CD8-positive, alpha-beta T cell (primary cell): ENCODE measurements at regions of chr16 and their contacts with region 1.

Region 1: GRCh38 chr16:30065143-30065850 is at the start of gene ALDOA:
- DNase-seq: peak; percentile 82 to 97 (median 94)
- ATAC-seq: peak; percentile 82
- H3K4me3 ChIP-seq: peak within 1 kb of the TSS; percentile 94 to 99
- H3K4me3 Mint-ChIP-seq: peak within 1 kb of the TSS; percentile 98
- H3K27ac ChIP-seq: peak within 1 kb of the TSS; percentile 87 to 94
- H3K27ac Mint-ChIP-seq: peak within 1 kb of the TSS; percentile 98
- H3K4me1 ChIP-seq: peaks cover 48% of the 10 kb centered on the region
- H3K4me1 Mint-ChIP-seq: peaks cover 43% of the 10 kb centered on the region
- H3K27me3 ChIP-seq: no peaks in the 10 kb centered on the region
- H3K27me3 Mint-ChIP-seq: no peaks in the 10 kb centered on the region
- CTCF ChIP-seq: no peak
- total RNA-seq, gene ALDOA: 339 to 359 TPM

Region 2: GRCh38 chr16:29951625-29952365 is 113.5 kb before region 1 on chr16:
- CTCF ChIA-PET with region 1: no interaction called
- POLR2A ChIA-PET with region 1: no interaction called
- intact Hi-C with region 1: no loop called
- DNase-seq: no peak
- ATAC-seq: no peak
- H3K4me3 ChIP-seq: no peak overlapping the region
- H3K4me3 Mint-ChIP-seq: no peak overlapping the region
- H3K27ac ChIP-seq: no peak overlapping the region
- H3K27ac Mint-ChIP-seq: no peak overlapping the region
- H3K4me1 ChIP-seq: no peaks in the 10 kb centered on the region
- H3K4me1 Mint-ChIP-seq: no peaks in the 10 kb centered on the region
- H3K27me3 ChIP-seq: no peaks in the 10 kb centered on the region
- H3K27me3 Mint-ChIP-seq: no peaks in the 10 kb centered on the region
- CTCF ChIP-seq: no peak

Region 3: GRCh38 chr16:29995911-29996772 is 69.2 kb before region 1 on chr16 and contains the start of gene INO80E:
- CTCF ChIA-PET with region 1: no interaction called
- POLR2A ChIA-PET with region 1: no interaction called
- intact Hi-C with region 1: loop called (anchors 1 kb)
- DNase-seq: peak; percentile 98 to 100 (median 99)
- ATAC-seq: peak; percentile 96
- H3K4me3 ChIP-seq: peak within 1 kb of the TSS; percentile 93 to 100
- H3K4me3 Mint-ChIP-seq: peak within 1 kb of the TSS; percentile 94
- H3K27ac ChIP-seq: peak within 1 kb of the TSS; percentile 99
- H3K27ac Mint-ChIP-seq: peak within 1 kb of the TSS; percentile 97
- H3K4me1 ChIP-seq: peaks cover 14% of the 10 kb centered on the region
- H3K4me1 Mint-ChIP-seq: peaks cover 39% of the 10 kb centered on the region
- H3K27me3 ChIP-seq: no peaks in the 10 kb centered on the region
- H3K27me3 Mint-ChIP-seq: no peaks in the 10 kb centered on the region
- CTCF ChIP-seq: no peak
- total RNA-seq, gene INO80E: 49.8 to 59.4 TPM

Region 4: DNA sequence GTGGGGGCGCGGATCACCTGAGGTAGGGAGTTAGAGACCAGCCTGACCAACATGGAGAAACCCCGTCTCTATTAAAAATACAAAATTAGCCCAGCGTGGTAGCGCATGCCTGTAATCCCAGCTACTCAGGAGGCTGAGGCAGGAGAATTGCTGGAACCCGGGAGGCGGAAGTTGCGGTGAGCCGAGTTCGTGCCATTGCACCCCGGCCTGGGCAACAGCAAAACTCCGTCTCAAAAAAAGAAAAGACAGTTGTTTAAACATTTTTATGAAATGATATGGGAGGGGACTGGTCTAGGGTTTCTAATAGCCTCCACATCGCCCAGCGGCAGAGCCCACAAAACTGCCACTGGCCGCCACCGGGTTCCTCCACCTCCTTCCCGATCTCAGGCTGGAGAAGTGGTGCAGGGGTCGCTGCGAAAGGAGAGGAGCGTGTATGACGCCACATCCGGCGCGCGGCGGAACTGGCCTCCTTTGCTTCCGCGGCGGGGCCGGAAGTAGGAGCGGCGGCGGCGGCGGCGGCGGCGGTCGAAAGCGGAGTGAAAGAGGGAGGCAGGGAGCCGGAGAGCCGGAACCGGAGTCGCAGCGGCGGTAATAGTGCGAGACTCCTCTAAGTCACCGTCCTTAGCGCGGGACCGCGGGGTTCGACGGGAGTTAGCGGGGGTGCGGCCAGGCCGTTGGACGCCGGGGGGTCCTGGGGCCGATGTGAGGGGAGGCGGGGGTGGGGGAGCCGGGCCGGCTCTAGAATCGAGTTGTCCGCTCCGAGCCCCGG is 10.4 kb after region 1 on chr16 and contains the start of gene PPP4C:
- CTCF ChIA-PET with region 1: interaction called, 5 read pairs
- POLR2A ChIA-PET with region 1: interaction called, 63 read pairs
- intact Hi-C with region 1: loop called (anchors 1 kb)
- DNase-seq: peak; percentile 65 to 94 (median 89)
- ATAC-seq: peak; percentile 88
- H3K4me3 ChIP-seq: peak within 1 kb of the TSS; percentile 96 to 99
- H3K4me3 Mint-ChIP-seq: peak within 1 kb of the TSS; percentile 93
- H3K27ac ChIP-seq: peak within 1 kb of the TSS; percentile 82 to 92
- H3K27ac Mint-ChIP-seq: peak within 1 kb of the TSS; percentile 96
- H3K4me1 ChIP-seq: peaks cover 31% of the 10 kb centered on the region
- H3K4me1 Mint-ChIP-seq: peaks cover 38% of the 10 kb centered on the region
- H3K27me3 ChIP-seq: no peaks in the 10 kb centered on the region
- H3K27me3 Mint-ChIP-seq: no peaks in the 10 kb centered on the region
- CTCF ChIP-seq: no peak
- total RNA-seq, gene PPP4C: 89.4 to 97.4 TPM

Region 5: DNA sequence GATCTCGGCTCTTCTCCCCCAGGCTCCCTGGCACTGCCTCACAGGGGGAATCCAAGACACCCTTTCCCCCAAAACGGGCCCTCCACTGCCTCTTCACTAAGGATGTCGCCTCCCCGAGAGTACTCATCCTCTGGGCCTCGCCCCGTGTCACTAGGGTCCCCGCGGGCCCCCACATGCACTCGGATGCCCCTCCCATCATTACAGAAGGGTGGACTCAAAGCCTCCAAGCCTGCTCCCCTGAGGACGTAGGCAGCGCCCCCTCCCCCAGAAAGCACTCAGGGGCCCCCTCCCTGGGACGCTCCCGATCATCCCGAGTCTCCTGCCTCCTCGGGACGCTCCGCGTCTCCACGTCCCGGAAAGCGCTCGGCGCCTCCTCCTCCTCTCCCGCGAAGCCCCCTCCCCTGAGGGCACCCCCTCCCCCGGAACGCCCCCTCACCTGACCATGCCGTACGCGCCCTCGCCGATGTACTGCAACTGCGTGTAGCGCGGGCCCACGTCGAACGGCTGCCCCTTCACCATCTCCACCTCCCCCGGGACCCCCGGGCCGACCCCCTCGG is 57.4 kb after region 1 on chr16:
- CTCF ChIA-PET with region 1: no interaction called
- POLR2A ChIA-PET with region 1: interaction called, 3 read pairs
- intact Hi-C with region 1: loop called (anchors 1 kb)
- DNase-seq: peak in 7 of 9 experiments; percentile 14 to 58 (median 34)
- ATAC-seq: peak; percentile 29
- H3K4me3 ChIP-seq: peak overlapping the region; percentile 83 to 85
- H3K4me3 Mint-ChIP-seq: peak overlapping the region; percentile 85
- H3K27ac ChIP-seq: peak overlapping the region; percentile 34 to 55
- H3K27ac Mint-ChIP-seq: peak overlapping the region; percentile 87
- H3K4me1 ChIP-seq: peaks cover 24% of the 10 kb centered on the region
- H3K4me1 Mint-ChIP-seq: peaks cover 27% of the 10 kb centered on the region
- H3K27me3 ChIP-seq: no peaks in the 10 kb centered on the region
- H3K27me3 Mint-ChIP-seq: no peaks in the 10 kb centered on the region
- CTCF ChIP-seq: no peak

Region 6: DNA sequence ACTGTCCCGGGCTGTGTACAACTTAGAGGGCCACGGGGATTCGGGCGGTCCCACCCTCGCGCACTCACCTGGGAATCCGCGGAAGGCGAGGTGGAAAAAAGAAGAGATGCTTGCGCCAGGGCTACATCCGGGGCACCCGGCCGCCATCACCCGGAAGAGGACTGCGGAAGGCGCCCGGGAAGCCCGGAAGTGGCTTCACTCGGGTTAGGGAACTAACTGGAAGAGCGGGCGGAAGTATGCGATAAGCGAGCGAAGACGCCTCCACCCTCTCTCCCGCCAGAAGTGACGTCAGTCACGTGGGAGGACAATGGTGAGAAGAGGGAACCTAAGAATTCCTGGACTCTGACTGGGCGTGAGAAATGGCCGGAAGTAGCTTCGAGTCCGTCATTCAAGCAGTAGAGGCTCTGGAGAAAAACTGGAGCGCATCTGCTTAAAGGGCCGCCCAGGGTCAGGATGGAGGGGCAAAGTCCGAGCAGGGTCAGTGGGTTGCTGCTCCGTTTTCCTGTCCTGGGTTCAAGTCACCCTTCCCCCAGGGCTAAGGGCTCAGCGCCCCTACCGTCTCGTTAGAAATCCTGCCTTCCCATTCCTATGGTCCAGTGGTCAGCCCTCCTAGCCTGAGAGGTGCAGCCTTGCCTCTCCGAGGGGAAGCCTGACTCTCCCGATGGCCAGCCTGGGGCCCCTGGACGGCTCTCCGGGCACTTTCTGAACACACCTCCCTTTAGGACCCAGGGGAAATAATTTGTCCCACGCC is 290.0 kb after region 1 on chr16 and contains the start of gene CD2BP2:
- CTCF ChIA-PET with region 1: no interaction called
- POLR2A ChIA-PET with region 1: interaction called, 3 read pairs
- intact Hi-C with region 1: loop called in 1 of 2 experiments (anchors 5 kb)
- DNase-seq: peak; percentile 72 to 97 (median 86)
- ATAC-seq: peak; percentile 88
- H3K4me3 ChIP-seq: peak within 1 kb of the TSS; percentile 70 to 98
- H3K4me3 Mint-ChIP-seq: peak within 1 kb of the TSS; percentile 94
- H3K27ac ChIP-seq: peak within 1 kb of the TSS; percentile 63 to 98
- H3K27ac Mint-ChIP-seq: peak within 1 kb of the TSS; percentile 98
- H3K4me1 ChIP-seq: peaks cover 32% of the 10 kb centered on the region
- H3K4me1 Mint-ChIP-seq: peaks cover 27% of the 10 kb centered on the region
- H3K27me3 ChIP-seq: no peaks in the 10 kb centered on the region
- H3K27me3 Mint-ChIP-seq: no peaks in the 10 kb centered on the region
- CTCF ChIP-seq: no peak
- total RNA-seq, gene CD2BP2: 35.4 to 35.9 TPM

Region 7: GRCh38 chr16:31202414-31203375 is 1137.4 kb after region 1 on chr16 and contains the start of gene PYCARD:
- CTCF ChIA-PET with region 1: no interaction called
- POLR2A ChIA-PET with region 1: no interaction called
- intact Hi-C with region 1: no loop called
- DNase-seq: peak in 5 of 9 experiments; percentile 21 to 59 (median 43)
- ATAC-seq: peak; percentile 24
- H3K4me3 ChIP-seq: peak within 1 kb of the TSS; percentile 93 to 96
- H3K4me3 Mint-ChIP-seq: peak within 1 kb of the TSS; percentile 91
- H3K27ac ChIP-seq: peak within 1 kb of the TSS; percentile 53 to 64
- H3K27ac Mint-ChIP-seq: peak within 1 kb of the TSS; percentile 88
- H3K4me1 ChIP-seq: peaks cover 46% of the 10 kb centered on the region
- H3K4me1 Mint-ChIP-seq: peaks cover 46% of the 10 kb centered on the region
- H3K27me3 ChIP-seq: no peaks in the 10 kb centered on the region
- H3K27me3 Mint-ChIP-seq: no peaks in the 10 kb centered on the region
- CTCF ChIP-seq: no peak
- total RNA-seq, gene PYCARD: 6.4 to 6.6 TPM